ENCODE measurements at regions of chr10 and their contacts with region 1.

Region 1: GRCh38 chr10:29496341-29497162 is 138.2 kb downstream of the SVIL start:
- DNase-seq: no peak
- ATAC-seq: peak; percentile 69

Region 2: GRCh38 chr10:29386342-29386999 is 110.1 kb before region 1 on chr10:
- intact Hi-C with region 1: loop called (anchors 5 kb)
- DNase-seq: no peak
- ATAC-seq: no peak